Activated CD8-positive, alpha-beta T cell treated with anti-CD3 and anti-CD28 coated beads for 36 hours (primary cell): ENCODE measurements at regions of chr11 and their contacts with region 1.

Region 1: DNA sequence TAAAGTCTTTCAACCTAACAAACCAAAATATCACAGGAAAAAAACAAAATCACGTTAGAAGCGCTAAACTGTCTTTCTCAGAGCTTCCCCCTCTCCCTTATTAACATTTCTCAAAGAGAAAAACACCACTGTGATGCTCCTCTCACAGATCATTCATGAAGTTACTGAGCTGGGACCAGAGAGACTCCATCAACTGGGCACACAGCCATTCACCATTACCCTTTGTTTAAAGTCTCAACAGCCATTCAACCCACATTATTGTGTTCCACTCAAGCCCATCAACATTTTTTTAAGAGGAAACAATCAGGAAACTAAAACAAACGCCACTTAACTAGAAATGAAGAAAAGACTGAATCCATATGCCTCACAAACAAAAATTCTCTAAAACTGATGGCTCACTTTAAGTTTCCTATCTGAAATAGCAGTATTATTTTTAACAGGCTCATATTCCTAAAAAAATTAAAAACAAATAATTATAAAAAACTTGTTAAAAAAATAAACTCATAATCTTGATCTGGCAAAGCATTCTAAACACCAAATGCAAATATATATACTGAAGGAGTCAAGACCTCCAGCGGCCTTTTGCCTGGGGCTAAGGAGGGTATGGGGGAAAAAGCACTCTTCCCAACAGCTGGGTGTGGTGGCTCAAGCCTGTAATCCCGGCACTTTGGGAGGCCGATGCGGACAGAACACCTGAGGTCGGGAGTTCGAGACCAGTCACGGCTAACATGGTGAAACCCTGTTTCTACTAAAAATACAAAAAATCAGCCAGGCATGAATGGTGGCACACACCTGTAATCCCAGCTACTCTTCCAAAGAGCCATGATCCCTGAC is 14.0 kb downstream of the CELF1 start:
- DNase-seq: no peak
- ATAC-seq: no peak
- H3K4me3 Mint-ChIP-seq: no peak overlapping the region
- H3K27ac Mint-ChIP-seq: peak overlapping the region; percentile 77
- H3K4me1 Mint-ChIP-seq: peaks cover 58% of the 10 kb centered on the region
- H3K27me3 Mint-ChIP-seq: no peaks in the 10 kb centered on the region
- CTCF ChIP-seq: no peak

Region 2: DNA sequence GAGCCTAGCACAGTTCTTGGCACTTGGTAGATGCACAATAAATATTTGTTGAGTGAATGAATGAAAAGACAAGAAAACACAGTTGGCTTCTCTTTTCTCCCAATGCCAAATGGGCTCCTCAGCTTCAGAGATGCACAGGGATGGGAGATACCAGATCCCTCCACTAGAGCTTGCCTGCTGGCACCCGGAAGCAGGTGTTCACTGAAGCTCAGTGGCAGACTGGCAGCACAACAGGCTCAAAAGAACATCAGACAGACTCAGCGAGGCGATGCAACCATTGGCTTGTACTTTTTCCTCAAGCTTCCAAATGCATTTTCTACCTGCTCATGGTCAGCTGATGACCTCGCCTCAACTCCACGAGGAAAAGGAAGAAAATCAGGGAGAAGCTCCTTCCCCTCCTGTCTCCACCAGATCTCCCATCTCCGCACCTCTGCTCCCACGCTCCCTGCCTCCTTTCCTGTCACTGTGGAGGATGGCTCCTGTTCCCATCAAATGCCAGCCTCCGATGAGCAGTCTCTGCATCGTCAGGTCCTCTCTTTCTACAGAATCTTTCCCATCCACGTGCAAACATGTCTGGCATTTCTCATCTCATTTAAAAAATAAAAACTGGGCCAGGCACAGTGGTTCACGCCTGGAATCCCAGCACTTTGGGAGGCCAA is 95.8 kb before region 1 on chr11:
- CTCF ChIA-PET with region 1: no interaction called
- POLR2A ChIA-PET with region 1: no interaction called
- intact Hi-C with region 1: no loop called
- DNase-seq: peak; percentile 23
- ATAC-seq: peak; percentile 78
- H3K4me3 Mint-ChIP-seq: no peak overlapping the region
- H3K27ac Mint-ChIP-seq: no peak overlapping the region
- H3K4me1 Mint-ChIP-seq: peaks cover 6% of the 10 kb centered on the region
- H3K27me3 Mint-ChIP-seq: no peaks in the 10 kb centered on the region
- CTCF ChIP-seq: no peak

Region 3: GRCh38 chr11:47509077-47509536 is 29.9 kb before region 1 on chr11:
- CTCF ChIA-PET with region 1: interaction called, 10 read pairs
- POLR2A ChIA-PET with region 1: interaction called, 6 read pairs
- intact Hi-C with region 1: no loop called
- DNase-seq: no peak
- ATAC-seq: peak; percentile 31
- H3K4me3 Mint-ChIP-seq: no peak overlapping the region
- H3K27ac Mint-ChIP-seq: peak overlapping the region; percentile 77
- H3K4me1 Mint-ChIP-seq: peaks cover 76% of the 10 kb centered on the region
- H3K27me3 Mint-ChIP-seq: no peaks in the 10 kb centered on the region
- CTCF ChIP-seq: no peak